RWPE1 (cell line): ENCODE measurements at regions of chr15 and their contacts with region 1.

Region 1: GRCh38 chr15:100873029-100873677 is 6.5 kb upstream of the ALDH1A3 start:
- DNase-seq: peak; percentile 78
- H3K27ac ChIP-seq: no peak overlapping the region
- CTCF ChIP-seq: peak; percentile 98

Region 2: GRCh38 chr15:100580414-100580813 is 292.7 kb before region 1 on chr15:
- CTCF ChIA-PET with region 1: no interaction called
- POLR2A ChIA-PET with region 1: no interaction called
- DNase-seq: no peak
- H3K27ac ChIP-seq: no peak overlapping the region
- CTCF ChIP-seq: no peak

Region 3: GRCh38 chr15:100713163-100713867 is 159.8 kb before region 1 on chr15:
- CTCF ChIA-PET with region 1: interaction called, 13 read pairs
- POLR2A ChIA-PET with region 1: no interaction called
- DNase-seq: peak; percentile 99
- H3K27ac ChIP-seq: peak overlapping the region; percentile 99
- CTCF ChIP-seq: no peak

Region 4: DNA sequence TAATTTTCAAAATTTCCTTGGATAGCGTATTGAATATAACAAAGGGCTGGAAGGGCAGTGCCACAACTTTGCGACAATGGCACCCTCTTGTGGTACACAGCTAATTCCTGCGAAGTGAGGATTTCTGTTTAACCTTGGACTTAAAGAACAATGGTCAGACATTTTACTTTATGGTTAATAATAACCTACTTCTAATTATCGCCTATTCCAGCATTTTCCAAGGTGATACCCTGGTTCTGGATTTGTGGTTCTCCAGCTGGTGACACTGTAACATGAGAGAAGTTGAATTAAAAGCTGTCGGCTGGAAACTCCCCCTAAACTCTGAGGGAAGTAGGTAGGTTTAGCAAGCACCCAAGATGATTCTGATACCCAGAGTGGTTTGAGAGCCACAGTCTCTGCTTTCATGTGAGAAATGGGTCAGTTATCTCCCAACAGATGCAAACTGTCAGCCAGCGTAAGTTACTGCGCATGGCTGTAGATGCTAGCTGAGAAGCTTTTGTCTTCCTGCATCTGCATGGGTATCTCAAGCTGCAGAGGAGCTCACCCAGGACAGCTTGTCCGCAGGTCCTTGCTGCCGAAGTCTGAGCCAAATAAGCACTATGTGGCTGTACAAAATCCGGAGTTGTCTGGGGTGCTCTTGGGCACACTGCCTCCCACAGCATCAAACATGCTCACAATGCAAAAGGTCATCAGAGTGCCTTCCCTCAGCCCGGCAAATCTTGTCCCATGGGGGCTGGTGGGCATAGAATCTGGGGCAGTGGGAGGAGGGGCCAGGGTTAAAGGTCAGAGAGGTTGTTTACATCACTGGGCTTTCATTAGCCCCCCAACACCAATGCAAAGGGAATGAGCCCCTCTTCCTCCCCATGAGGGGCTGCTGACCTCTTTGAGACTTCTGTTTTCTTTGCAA is 385.3 kb after region 1 on chr15:
- CTCF ChIA-PET with region 1: no interaction called
- POLR2A ChIA-PET with region 1: no interaction called
- DNase-seq: peak; percentile 61
- H3K27ac ChIP-seq: no peak overlapping the region
- CTCF ChIP-seq: peak; percentile 89